ENCODE measurements at regions of chr3 and their contacts with region 1.

Region 1: GRCh38 chr3:121545574-121546455 is at the start of gene POLQ:
- DNase-seq: peak; percentile 73 to 93 (median 88)
- ATAC-seq: peak; percentile 99
- H3K4me3 ChIP-seq: peak within 1 kb of the TSS; percentile 65 to 72
- H3K4me3 Mint-ChIP-seq: peak within 1 kb of the TSS; percentile 92
- H3K27ac ChIP-seq: peak within 1 kb of the TSS; percentile 53 to 75
- H3K27ac Mint-ChIP-seq: peak within 1 kb of the TSS; percentile 88
- H3K4me1 ChIP-seq: peaks cover 6% of the 10 kb centered on the region
- H3K4me1 Mint-ChIP-seq: peaks cover 12% of the 10 kb centered on the region
- H3K27me3 ChIP-seq: peaks cover 0 to 2% of the 10 kb centered on the region in 2 experiments
- H3K27me3 Mint-ChIP-seq: no peaks in the 10 kb centered on the region
- CTCF ChIP-seq: no peak
- total RNA-seq, gene POLQ: 0.19 to 0.28 TPM

Region 2: GRCh38 chr3:121660356-121661171 is 114.7 kb after region 1 on chr3 and contains the start of gene HCLS1:
- CTCF ChIA-PET with region 1: no interaction called
- POLR2A ChIA-PET with region 1: interaction called, 3 read pairs
- intact Hi-C with region 1: loop called (anchors 1 to 2 kb)
- DNase-seq: peak; percentile 52 to 90 (median 71)
- ATAC-seq: peak; percentile 83
- H3K4me3 ChIP-seq: peak within 1 kb of the TSS; percentile 58
- H3K4me3 Mint-ChIP-seq: peak within 1 kb of the TSS; percentile 92
- H3K27ac ChIP-seq: peak within 1 kb of the TSS; percentile 86 to 95
- H3K27ac Mint-ChIP-seq: peak within 1 kb of the TSS; percentile 99
- H3K4me1 ChIP-seq: peaks cover 43% of the 10 kb centered on the region
- H3K4me1 Mint-ChIP-seq: peaks cover 54% of the 10 kb centered on the region
- H3K27me3 ChIP-seq: no peaks in the 10 kb centered on the region
- H3K27me3 Mint-ChIP-seq: no peaks in the 10 kb centered on the region
- CTCF ChIP-seq: no peak
- total RNA-seq, gene HCLS1: 162 to 179 TPM

Region 3: GRCh38 chr3:122092460-122093165 is 546.8 kb after region 1 on chr3:
- CTCF ChIA-PET with region 1: no interaction called
- POLR2A ChIA-PET with region 1: no interaction called
- intact Hi-C with region 1: loop called (anchors 2 to 5 kb)
- DNase-seq: peak in 3 of 9 experiments; percentile 29 to 67 (median 41)
- ATAC-seq: peak; percentile 58
- H3K4me3 ChIP-seq: no peak overlapping the region
- H3K4me3 Mint-ChIP-seq: no peak overlapping the region
- H3K27ac ChIP-seq: no peak overlapping the region
- H3K27ac Mint-ChIP-seq: no peak overlapping the region
- H3K4me1 ChIP-seq: no peaks in the 10 kb centered on the region
- H3K4me1 Mint-ChIP-seq: peaks cover 4% of the 10 kb centered on the region
- H3K27me3 ChIP-seq: no peaks in the 10 kb centered on the region
- H3K27me3 Mint-ChIP-seq: no peaks in the 10 kb centered on the region
- CTCF ChIP-seq: no peak

Region 4: DNA sequence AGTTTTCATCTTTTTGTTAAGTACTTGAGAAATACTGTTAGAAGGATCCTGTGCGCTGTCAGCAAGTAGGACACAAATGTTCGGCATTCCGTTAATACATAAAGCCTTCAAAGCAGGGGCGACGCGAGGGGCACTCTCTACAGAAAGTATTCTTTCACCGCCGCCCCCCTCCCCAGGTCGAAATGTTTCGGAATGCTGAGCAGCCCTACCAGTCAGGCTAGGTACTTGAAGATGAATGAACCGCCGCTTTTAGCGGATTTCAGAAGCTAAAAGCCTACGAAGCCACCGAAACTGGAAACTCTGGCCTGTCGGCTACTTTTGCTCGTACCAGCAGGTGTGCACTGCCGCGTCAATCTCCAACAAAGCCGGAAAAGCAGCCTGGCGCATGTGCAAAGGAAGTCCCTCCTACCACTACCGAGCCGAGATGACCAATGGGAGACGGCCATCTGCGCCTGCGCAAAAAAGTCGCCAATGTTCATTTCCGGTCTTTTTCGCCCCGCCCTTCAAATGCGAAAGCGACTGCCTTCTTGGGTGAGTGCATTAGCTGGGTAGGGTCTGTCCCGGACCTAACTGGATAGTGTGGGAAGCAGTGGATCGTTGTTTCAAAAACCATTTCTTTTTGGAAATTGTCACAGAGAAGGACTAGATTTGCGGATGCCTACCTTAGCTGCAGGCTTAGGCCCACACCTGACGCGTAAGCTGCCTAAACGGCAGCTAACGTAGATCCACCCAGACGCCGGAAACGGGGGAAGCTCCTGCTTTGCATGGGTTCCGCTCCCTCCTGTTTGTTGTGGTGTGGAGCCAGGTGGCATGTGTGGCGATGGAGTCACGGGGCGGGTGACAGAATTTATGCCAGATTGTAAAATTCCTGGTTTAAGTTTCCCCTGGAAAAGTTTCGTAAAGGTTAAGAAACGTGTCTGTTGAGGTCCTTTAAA is 870.2 kb after region 1 on chr3 and contains the start of gene WDR5B:
- CTCF ChIA-PET with region 1: no interaction called
- POLR2A ChIA-PET with region 1: no interaction called
- intact Hi-C with region 1: loop called in 1 of 2 experiments (anchors 10 kb)
- DNase-seq: peak; percentile 97 to 99 (median 98)
- ATAC-seq: peak; percentile 88
- H3K4me3 ChIP-seq: peak within 1 kb of the TSS; percentile 71 to 76
- H3K4me3 Mint-ChIP-seq: peak within 1 kb of the TSS; percentile 97
- H3K27ac ChIP-seq: peak within 1 kb of the TSS; percentile 91 to 94
- H3K27ac Mint-ChIP-seq: peak within 1 kb of the TSS; percentile 100
- H3K4me1 ChIP-seq: peaks cover 26% of the 10 kb centered on the region
- H3K4me1 Mint-ChIP-seq: peaks cover 58% of the 10 kb centered on the region
- H3K27me3 ChIP-seq: no peaks in the 10 kb centered on the region
- H3K27me3 Mint-ChIP-seq: no peaks in the 10 kb centered on the region
- CTCF ChIP-seq: no peak
- total RNA-seq, gene WDR5B: 1.9 to 2.7 TPM

Region 5: DNA sequence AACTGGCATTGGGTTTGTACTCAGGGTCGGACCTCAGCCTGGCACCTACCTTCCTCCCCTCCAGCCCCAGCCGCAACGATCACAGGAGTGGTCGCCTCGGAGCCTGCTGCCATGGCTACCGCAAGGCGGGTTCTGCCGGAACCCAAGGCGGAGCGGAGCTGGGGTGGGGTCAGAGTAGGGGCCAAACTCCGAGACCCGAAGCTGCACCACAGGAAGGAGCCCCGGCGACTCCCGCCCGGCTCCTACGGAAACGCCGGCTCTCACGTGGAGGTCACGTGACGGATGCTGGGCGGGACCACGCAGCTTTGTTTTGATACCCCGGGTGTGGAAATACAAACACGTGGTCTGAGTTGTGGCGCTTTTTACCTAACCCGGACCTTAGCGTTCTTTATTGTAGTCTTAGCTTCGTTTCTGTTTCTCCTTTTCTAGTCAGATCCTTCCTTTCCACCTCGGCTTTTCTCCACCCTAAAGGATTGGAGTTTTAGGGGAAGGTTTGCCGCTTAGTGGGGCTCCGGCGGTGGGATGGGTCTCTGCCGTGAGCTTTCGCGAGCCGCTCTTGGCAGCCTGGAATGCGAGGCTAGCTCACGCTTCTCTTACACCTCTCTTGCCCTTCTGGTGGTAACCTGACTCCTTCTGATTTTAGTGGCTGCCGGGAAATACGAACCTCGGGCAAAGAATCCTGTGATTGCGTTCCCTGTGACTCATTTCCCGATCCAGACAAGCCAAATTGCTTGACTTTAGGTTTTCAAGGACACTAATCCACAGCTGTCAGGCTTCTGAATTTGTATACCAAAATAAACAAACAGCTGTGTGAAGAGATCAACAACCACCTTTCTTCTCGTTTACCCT is 1248.0 kb after region 1 on chr3 and contains the start of gene HSPBAP1:
- CTCF ChIA-PET with region 1: no interaction called
- POLR2A ChIA-PET with region 1: no interaction called
- intact Hi-C with region 1: loop called in 1 of 2 experiments (anchors 2 kb)
- DNase-seq: peak; percentile 72 to 95 (median 90)
- ATAC-seq: peak; percentile 67
- H3K4me3 ChIP-seq: peak within 1 kb of the TSS; percentile 78 to 81
- H3K4me3 Mint-ChIP-seq: peak within 1 kb of the TSS; percentile 91
- H3K27ac ChIP-seq: peak within 1 kb of the TSS; percentile 77 to 91
- H3K27ac Mint-ChIP-seq: no peak within 1 kb of the TSS
- H3K4me1 ChIP-seq: peaks cover 28% of the 10 kb centered on the region
- H3K4me1 Mint-ChIP-seq: peaks cover 38% of the 10 kb centered on the region
- H3K27me3 ChIP-seq: no peaks in the 10 kb centered on the region
- H3K27me3 Mint-ChIP-seq: no peaks in the 10 kb centered on the region
- CTCF ChIP-seq: no peak
- total RNA-seq, gene HSPBAP1: 8.7 to 9.3 TPM

Region 6: DNA sequence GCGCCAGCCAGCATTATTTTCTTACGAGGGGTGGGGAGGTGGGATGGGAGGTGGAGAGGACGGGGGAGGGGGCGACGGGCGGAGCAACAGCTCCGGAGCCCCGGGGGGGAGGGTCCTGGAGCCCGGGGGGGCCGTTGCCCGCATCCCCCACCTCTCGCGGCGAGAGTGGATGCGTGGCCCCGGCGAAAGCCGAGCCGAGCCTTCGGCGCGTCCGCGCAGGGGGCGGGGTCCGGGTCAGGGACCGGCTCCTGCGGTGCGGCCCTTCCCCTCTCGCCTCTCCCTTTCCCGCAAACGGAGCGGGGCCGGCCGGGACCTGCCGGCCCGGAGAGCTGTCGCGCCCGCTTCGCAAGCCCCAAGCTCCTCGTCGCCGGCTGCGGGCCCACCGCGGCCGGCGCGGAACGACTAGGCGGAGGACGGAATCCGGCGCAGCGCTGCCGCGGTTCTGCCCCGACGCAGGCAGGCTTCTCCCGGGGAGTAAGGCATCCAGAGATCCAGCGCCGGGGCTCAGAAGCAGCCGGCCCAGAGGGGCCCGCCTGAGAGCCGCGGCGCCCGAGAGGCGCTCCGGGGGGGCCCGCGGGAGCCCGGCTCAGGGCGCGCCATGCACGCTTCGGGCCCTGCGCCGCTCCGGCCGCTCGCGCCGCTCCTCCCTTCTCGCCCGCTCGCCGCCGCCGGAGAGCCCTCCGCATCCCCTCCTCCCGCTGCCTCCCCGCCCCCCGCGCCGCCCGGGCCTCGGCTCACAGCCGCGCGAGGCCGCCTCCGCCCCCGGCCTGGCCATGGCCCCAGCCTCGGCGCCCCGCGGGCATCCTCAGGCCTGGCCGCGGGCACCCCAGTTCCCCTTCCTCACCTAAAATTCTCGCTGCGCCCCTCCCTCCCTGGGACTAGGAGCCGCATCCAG is 1903.5 kb after region 1 on chr3:
- CTCF ChIA-PET with region 1: no interaction called
- POLR2A ChIA-PET with region 1: no interaction called
- intact Hi-C with region 1: loop called in 1 of 2 experiments (anchors 5 kb)
- DNase-seq: peak in 2 of 9 experiments; percentile 15 to 37
- ATAC-seq: peak; percentile 24
- H3K4me3 ChIP-seq: peak overlapping the region; percentile 21 to 43
- H3K4me3 Mint-ChIP-seq: peak overlapping the region; percentile 62
- H3K27ac ChIP-seq: no peak overlapping the region
- H3K27ac Mint-ChIP-seq: no peak overlapping the region
- H3K4me1 ChIP-seq: no peaks in the 10 kb centered on the region
- H3K4me1 Mint-ChIP-seq: peaks cover 5% of the 10 kb centered on the region
- H3K27me3 ChIP-seq: peaks cover 7 to 22% of the 10 kb centered on the region in 2 experiments
- H3K27me3 Mint-ChIP-seq: peaks cover 52% of the 10 kb centered on the region
- CTCF ChIP-seq: no peak